Calu3 (cell line): ENCODE measurements at regions of chr12 and their contacts with region 1.

Region 1: GRCh38 chr12:130818635-130819576 is 20.1 kb downstream of the STX2 start:
- DNase-seq: peak; percentile 96
- H3K4me3 Mint-ChIP-seq: peak overlapping the region; percentile 85
- H3K27ac Mint-ChIP-seq: peak overlapping the region; percentile 37
- H3K4me1 Mint-ChIP-seq: peaks cover 8% of the 10 kb centered on the region
- H3K27me3 Mint-ChIP-seq: no peaks in the 10 kb centered on the region
- CTCF ChIP-seq: peak; percentile 96

Region 2: DNA sequence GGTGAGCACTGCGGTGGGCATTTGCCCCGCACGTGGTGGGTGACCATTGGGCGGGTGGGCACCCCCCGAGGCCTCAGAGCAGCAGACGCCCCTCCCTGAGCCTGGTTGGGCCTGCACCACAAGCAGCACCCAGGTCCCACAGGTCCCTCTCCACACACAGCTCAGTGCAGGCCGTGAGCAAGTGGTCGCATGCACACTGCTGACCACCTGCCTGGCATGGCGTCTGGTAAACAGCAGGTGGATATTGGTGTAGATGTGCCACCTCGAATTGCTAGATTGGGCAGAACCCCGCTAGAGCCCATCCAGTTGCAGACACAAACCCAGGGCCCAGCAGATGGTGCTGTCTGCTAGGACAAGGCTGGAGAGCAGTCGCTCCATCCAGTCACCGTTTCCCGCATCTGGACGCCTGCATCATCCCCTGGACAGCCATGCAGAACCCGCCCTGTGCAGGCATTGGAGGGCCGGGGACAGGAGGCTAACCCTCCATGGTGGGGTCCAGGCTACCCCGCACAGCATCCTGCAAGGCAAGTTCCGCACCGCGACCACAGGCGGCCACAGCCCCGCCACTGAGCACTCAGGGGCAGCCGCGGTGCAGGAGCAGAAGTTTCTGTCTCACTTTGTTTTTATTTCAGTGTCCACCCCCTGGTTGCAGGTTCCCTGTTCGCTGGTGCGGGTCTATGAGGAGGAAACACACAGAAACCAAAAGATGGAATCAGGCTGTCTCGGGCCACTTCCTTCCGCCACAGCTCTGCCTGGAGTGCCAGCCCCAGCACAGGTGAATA is 57.2 kb before region 1 on chr12:
- CTCF ChIA-PET with region 1: no interaction called
- intact Hi-C with region 1: loop called (anchors 1 kb)
- DNase-seq: peak; percentile 79
- H3K4me3 Mint-ChIP-seq: no peak overlapping the region
- H3K27ac Mint-ChIP-seq: no peak overlapping the region
- H3K4me1 Mint-ChIP-seq: no peaks in the 10 kb centered on the region
- H3K27me3 Mint-ChIP-seq: peaks cover 13% of the 10 kb centered on the region
- CTCF ChIP-seq: peak; percentile 48

Region 3: DNA sequence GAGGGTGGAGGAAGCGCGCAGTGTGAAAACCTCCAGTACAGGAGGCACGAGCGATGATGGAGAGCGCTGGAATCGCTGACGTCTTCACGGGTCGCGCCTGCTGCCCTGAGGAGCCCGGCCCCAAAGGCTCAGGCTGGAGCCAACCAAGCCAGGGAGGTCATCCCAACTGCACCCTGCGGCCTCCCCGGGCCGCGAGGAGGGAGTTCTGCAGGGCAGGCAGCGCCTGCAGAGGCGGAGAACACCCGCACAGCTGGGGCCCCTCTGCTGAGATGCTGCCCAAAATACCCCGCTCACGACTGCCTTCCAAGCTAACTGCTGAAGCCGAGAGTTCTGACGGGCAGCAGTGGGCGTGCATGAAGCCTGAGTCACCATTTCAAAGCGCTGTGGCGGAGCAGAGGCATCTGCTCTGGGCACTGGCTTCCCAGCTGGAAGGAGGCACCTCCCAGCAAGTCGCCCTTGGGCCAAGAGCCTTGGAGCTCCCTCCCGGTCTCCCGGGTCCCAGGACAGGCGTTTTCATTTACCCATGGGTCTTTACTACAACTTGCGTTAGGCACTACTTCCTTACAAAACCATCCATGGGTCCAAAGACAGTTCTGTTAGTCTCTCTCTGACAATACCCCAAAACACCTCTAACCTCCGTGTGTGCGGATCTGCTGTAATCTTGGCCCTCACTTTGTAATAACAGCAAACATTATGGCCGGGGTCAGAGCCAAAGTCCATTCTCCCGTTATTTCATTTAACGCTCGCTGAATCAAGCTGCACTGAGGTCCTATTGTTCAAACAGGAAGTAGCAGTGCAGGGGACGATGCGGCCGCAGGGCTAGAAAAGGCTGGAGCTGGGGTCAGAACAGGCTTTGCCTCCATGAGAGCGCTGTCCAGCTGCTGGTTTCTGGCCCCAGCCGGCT is 42.7 kb before region 1 on chr12:
- CTCF ChIA-PET with region 1: no interaction called
- intact Hi-C with region 1: no loop called
- DNase-seq: peak; percentile 82
- H3K4me3 Mint-ChIP-seq: peak overlapping the region; percentile 71
- H3K27ac Mint-ChIP-seq: peak overlapping the region; percentile 28
- H3K4me1 Mint-ChIP-seq: peaks cover 16% of the 10 kb centered on the region
- H3K27me3 Mint-ChIP-seq: peaks cover 10% of the 10 kb centered on the region
- CTCF ChIP-seq: no peak